CD8-positive, alpha-beta T cell (primary cell): ENCODE measurements at regions of chr9 and their contacts with region 1.

Region 1: DNA sequence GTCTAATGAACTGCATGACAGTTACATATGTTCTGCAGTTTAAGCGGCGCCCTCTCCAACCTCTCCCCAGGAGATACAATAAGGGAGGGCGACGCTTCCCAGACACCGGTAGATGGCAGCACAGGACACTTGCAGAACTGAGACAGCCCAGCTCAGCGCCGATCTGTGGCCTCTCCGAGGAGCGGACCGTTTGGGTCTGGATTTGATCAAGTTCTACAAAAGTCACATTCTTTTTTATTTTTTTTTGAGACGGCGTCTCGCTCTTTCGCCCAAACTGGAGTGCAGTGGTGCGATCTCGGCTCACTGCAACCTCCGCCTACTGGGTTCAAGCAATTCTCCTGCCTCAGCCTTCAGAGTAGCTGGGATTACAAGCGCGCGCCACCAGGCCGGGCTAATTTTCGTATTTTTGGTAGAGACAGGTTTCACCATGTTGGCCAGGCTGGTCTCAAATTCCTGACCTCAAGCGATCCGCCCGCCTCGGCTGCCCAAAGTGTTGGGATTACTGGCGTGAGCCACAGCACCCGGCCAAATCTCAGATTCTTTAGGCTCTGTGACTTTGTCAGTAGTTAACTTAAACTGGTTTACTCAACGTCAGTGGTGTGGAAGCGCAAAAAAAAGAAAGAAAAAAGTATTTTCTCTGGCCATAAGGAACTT is 1.4 kb upstream of the ATOSB start:
- DNase-seq: peak; percentile 78 to 96 (median 88)
- ATAC-seq: peak; percentile 65
- H3K4me3 ChIP-seq: peak overlapping the region; percentile 64 to 69
- H3K4me3 Mint-ChIP-seq: peak overlapping the region; percentile 94
- H3K27ac ChIP-seq: peak overlapping the region; percentile 64 to 91
- H3K27ac Mint-ChIP-seq: peak overlapping the region; percentile 94
- H3K4me1 ChIP-seq: peaks cover 34% of the 10 kb centered on the region
- H3K4me1 Mint-ChIP-seq: peaks cover 42% of the 10 kb centered on the region
- H3K27me3 ChIP-seq: peaks cover 0 to 2% of the 10 kb centered on the region in 2 experiments
- H3K27me3 Mint-ChIP-seq: peaks cover 2% of the 10 kb centered on the region
- CTCF ChIP-seq: peak; percentile 95

Region 2: DNA sequence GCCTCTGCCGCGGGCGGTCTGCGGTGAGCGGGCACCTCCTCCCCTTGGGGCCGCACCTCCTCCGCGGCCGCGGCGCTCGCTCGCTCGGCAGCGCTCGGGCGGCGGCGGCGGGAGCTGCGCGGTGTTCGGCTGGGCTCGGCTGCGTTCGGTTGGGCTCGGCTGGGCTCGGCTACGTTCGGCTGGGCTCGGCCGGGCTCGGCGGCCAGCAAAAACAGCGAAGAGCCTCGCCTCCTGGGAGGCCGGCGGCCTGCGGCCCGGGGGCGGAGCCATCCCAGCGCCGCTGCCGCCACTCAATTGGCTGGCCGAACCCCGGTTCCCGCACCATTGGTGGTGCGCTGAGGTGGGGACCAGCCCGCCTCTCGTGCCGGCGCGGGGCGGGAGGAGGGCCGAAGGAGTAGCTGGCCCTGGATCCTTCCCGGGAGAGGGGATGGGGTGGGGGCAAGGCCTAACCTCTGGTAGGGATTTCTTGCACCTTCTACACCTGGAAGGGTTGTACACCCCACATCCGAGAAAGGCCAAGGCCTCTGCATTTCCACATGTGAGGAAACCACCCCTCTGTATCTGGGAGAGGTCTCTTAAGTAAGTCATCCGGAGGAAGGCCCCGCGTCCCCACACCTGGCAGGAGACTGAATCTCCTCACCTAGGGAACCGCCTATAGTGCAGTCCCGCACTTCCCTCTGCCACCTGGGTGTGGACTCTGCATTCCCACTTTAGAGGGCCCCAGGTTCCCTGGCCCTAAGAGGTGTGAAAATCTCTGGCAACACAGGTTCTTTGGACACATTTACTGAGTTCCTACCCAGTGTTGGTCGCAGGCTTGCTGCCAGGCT is 593.8 kb before region 1 on chr9 and contains the start of gene ENHO:
- CTCF ChIA-PET with region 1: no interaction called
- POLR2A ChIA-PET with region 1: no interaction called
- intact Hi-C with region 1: loop called (anchors 2 to 10 kb)
- DNase-seq: peak; percentile 79 to 96 (median 87)
- ATAC-seq: peak; percentile 97
- H3K4me3 ChIP-seq: peak within 1 kb of the TSS; percentile 48 to 70
- H3K4me3 Mint-ChIP-seq: peak within 1 kb of the TSS; percentile 83
- H3K27ac ChIP-seq: peak within 1 kb of the TSS in 1 of 2 experiments; percentile 33
- H3K27ac Mint-ChIP-seq: no peak within 1 kb of the TSS
- H3K4me1 ChIP-seq: peaks cover 9% of the 10 kb centered on the region
- H3K4me1 Mint-ChIP-seq: peaks cover 4% of the 10 kb centered on the region
- H3K27me3 ChIP-seq: no peaks in the 10 kb centered on the region
- H3K27me3 Mint-ChIP-seq: peaks cover 2% of the 10 kb centered on the region
- CTCF ChIP-seq: no peak
- total RNA-seq, gene ENHO: not detected

Region 3: DNA sequence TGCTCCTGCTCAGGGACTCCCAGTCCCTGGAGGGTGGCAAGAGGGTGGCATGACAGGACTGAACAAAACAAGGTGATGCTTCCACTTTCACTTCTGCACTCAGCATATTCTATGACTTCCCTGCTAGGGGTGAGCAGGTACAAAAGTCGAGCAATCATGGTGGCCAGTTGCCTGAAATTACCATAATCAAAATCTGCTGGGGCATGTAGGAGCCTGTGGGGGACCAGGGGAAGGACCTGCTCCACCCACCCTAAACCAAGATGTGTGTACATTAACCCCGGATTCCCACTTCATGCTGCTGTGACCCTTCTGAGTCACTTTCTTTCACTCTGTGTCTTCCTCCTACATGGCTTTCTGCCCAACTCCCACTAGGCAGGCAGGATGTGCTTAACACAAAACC is 232.3 kb before region 1 on chr9:
- CTCF ChIA-PET with region 1: no interaction called
- POLR2A ChIA-PET with region 1: no interaction called
- intact Hi-C with region 1: no loop called
- DNase-seq: no peak
- ATAC-seq: no peak
- H3K4me3 ChIP-seq: no peak overlapping the region
- H3K4me3 Mint-ChIP-seq: no peak overlapping the region
- H3K27ac ChIP-seq: no peak overlapping the region
- H3K27ac Mint-ChIP-seq: no peak overlapping the region
- H3K4me1 ChIP-seq: no peaks in the 10 kb centered on the region
- H3K4me1 Mint-ChIP-seq: peaks cover 3% of the 10 kb centered on the region
- H3K27me3 ChIP-seq: no peaks in the 10 kb centered on the region
- H3K27me3 Mint-ChIP-seq: peaks cover 2% of the 10 kb centered on the region
- CTCF ChIP-seq: no peak

Region 4: DNA sequence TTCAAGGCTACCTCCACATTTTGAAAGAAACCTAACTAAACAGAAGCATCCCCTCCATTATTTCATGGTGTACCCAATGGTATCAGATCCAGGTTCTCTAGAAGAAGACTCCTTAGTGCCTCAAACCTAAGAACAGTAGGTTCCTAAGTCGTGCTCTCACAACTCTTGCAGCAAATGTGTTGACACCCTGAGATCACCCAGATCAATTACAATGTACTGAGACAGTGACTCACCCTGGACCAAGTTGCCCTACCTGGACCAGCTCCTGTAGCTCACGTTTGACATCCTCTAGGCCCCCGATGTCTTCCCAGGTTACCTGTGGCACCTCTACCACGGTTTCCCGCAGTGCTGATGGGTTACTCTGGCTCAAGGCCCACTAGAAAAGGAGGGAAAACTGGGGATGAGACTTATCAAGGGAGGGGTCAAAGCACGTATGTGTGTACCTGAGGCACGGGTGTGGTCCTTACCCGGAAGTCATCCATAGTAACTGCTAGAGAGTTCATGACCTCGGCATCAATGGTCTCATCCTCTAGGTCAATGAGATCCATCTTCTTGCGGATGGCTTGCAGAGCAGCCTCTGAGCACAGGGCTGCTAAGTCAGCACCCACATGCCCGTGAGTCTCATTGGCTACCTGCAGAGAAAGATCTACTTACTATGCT is 56.3 kb before region 1 on chr9:
- CTCF ChIA-PET with region 1: no interaction called
- POLR2A ChIA-PET with region 1: no interaction called
- intact Hi-C with region 1: no loop called
- DNase-seq: no peak
- ATAC-seq: no peak
- H3K4me3 ChIP-seq: no peak overlapping the region
- H3K4me3 Mint-ChIP-seq: no peak overlapping the region
- H3K27ac ChIP-seq: no peak overlapping the region
- H3K27ac Mint-ChIP-seq: no peak overlapping the region
- H3K4me1 ChIP-seq: no peaks in the 10 kb centered on the region
- H3K4me1 Mint-ChIP-seq: peaks cover 1% of the 10 kb centered on the region
- H3K27me3 ChIP-seq: no peaks in the 10 kb centered on the region
- H3K27me3 Mint-ChIP-seq: no peaks in the 10 kb centered on the region
- CTCF ChIP-seq: no peak

Region 5: DNA sequence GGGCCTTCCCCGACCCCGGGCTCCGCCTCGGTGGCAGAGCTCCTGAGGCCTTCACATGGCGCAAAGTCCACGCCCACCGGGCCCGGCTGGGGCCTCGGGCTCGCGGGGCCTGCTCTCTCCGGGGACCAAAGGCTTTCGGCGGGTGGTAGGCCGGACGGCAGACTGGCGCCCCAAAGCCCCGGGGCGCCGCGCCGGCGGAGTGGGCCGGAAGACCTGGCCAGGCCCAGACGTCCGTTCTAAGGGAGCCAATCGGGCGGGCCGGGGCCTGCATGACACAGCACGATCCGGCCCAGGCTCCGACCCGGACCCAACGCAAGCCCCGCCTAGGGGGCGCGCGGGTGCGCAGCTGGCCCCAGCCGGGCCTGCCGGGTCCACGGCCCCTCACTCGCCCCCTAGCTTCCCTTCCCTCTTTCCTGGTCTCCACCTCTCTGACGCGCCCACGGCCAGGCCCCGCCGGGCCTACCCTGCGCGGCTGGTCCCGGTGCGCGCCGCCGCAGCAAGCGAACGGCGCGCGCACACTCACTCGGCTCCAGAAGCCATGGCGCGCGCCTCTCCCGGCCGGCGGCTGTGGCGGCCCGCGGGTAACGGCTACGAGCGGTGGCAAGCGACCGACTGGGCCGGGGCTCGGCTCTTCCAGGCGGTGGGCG is 45.1 kb before region 1 on chr9:
- CTCF ChIA-PET with region 1: interaction called, 3 read pairs
- POLR2A ChIA-PET with region 1: interaction called, 16 read pairs
- intact Hi-C with region 1: loop called (anchors 1 kb)
- DNase-seq: peak; percentile 40 to 87 (median 73)
- ATAC-seq: peak; percentile 49
- H3K4me3 ChIP-seq: peak overlapping the region; percentile 82 to 93
- H3K4me3 Mint-ChIP-seq: peak overlapping the region; percentile 93
- H3K27ac ChIP-seq: peak overlapping the region; percentile 91 to 94
- H3K27ac Mint-ChIP-seq: peak overlapping the region; percentile 97
- H3K4me1 ChIP-seq: peaks cover 49% of the 10 kb centered on the region
- H3K4me1 Mint-ChIP-seq: peaks cover 49% of the 10 kb centered on the region
- H3K27me3 ChIP-seq: no peaks in the 10 kb centered on the region
- H3K27me3 Mint-ChIP-seq: no peaks in the 10 kb centered on the region
- CTCF ChIP-seq: peak; percentile 43

Region 6: GRCh38 chr9:35161713-35162604 is 44.9 kb after region 1 on chr9 and contains the start of gene UNC13B:
- CTCF ChIA-PET with region 1: interaction called, 5 read pairs
- POLR2A ChIA-PET with region 1: interaction called, 4 read pairs
- intact Hi-C with region 1: loop called (anchors 1 kb)
- DNase-seq: peak; percentile 21 to 84 (median 70)
- ATAC-seq: peak; percentile 92
- H3K4me3 ChIP-seq: peak within 1 kb of the TSS; percentile 85 to 89
- H3K4me3 Mint-ChIP-seq: peak within 1 kb of the TSS; percentile 92
- H3K27ac ChIP-seq: peak within 1 kb of the TSS in 1 of 2 experiments; percentile 1
- H3K27ac Mint-ChIP-seq: peak within 1 kb of the TSS; percentile 19
- H3K4me1 ChIP-seq: peaks cover 8% of the 10 kb centered on the region
- H3K4me1 Mint-ChIP-seq: peaks cover 20% of the 10 kb centered on the region
- H3K27me3 ChIP-seq: no peaks in the 10 kb centered on the region
- H3K27me3 Mint-ChIP-seq: peaks cover 7% of the 10 kb centered on the region
- CTCF ChIP-seq: no peak
- total RNA-seq, gene UNC13B: 0.14 to 0.76 TPM

Region 7: DNA sequence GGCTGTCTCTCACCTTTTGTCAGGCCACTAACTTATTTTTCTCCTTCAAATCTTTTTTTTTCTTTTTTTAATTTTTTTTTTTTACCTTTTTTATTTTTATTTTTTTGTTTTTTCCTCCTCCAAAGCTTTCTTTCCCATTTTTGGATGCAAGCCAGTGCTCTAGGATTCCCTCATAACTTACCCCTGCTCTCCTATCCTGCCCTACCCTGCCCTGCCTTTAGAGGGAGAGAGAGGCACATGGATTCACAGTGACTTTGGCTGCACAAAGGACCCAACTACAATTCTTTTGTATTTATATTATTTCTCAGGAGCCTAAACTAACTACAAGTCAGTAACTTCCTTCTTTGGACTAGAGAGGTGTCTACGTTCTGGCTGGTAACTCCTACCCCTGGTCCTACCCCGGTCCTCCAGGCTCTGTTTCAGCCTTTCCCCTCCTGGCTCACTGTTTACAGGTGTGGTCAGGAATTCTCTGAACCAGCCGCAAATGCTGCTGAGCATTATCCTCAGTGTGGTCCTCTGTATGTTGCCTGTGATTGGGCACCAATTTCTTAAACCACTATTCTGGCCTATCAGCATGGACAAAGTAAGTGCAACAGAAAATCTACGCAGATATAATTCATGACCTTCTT is 364.4 kb after region 1 on chr9:
- CTCF ChIA-PET with region 1: interaction called, 9 read pairs
- POLR2A ChIA-PET with region 1: no interaction called
- intact Hi-C with region 1: loop called (anchors 1 kb)
- DNase-seq: peak in 2 of 9 experiments; percentile 13 to 26
- ATAC-seq: peak; percentile 40
- H3K4me3 ChIP-seq: no peak overlapping the region
- H3K4me3 Mint-ChIP-seq: no peak overlapping the region
- H3K27ac ChIP-seq: no peak overlapping the region
- H3K27ac Mint-ChIP-seq: no peak overlapping the region
- H3K4me1 ChIP-seq: no peaks in the 10 kb centered on the region
- H3K4me1 Mint-ChIP-seq: no peaks in the 10 kb centered on the region
- H3K27me3 ChIP-seq: peaks cover 2 to 6% of the 10 kb centered on the region in 2 experiments
- H3K27me3 Mint-ChIP-seq: peaks cover 5% of the 10 kb centered on the region
- CTCF ChIP-seq: peak; percentile 22

Region 8: GRCh38 chr9:35657546-35658136 is 540.6 kb after region 1 on chr9 and contains the start of gene RMRP:
- CTCF ChIA-PET with region 1: no interaction called
- POLR2A ChIA-PET with region 1: no interaction called
- intact Hi-C with region 1: loop called in 1 of 2 experiments (anchors 2 kb)
- DNase-seq: peak; percentile 58 to 98 (median 83)
- ATAC-seq: peak; percentile 72
- H3K4me3 ChIP-seq: peak within 1 kb of the TSS; percentile 91 to 94
- H3K4me3 Mint-ChIP-seq: peak within 1 kb of the TSS; percentile 93
- H3K27ac ChIP-seq: peak within 1 kb of the TSS; percentile 99 to 100
- H3K27ac Mint-ChIP-seq: peak within 1 kb of the TSS; percentile 98
- H3K4me1 ChIP-seq: peaks cover 45% of the 10 kb centered on the region
- H3K4me1 Mint-ChIP-seq: peaks cover 69% of the 10 kb centered on the region
- H3K27me3 ChIP-seq: peaks cover 0 to 3% of the 10 kb centered on the region in 2 experiments
- H3K27me3 Mint-ChIP-seq: peaks cover 2% of the 10 kb centered on the region
- CTCF ChIP-seq: no peak
- total RNA-seq, gene RMRP: 22,073 to 26,359 TPM

Region 9: DNA sequence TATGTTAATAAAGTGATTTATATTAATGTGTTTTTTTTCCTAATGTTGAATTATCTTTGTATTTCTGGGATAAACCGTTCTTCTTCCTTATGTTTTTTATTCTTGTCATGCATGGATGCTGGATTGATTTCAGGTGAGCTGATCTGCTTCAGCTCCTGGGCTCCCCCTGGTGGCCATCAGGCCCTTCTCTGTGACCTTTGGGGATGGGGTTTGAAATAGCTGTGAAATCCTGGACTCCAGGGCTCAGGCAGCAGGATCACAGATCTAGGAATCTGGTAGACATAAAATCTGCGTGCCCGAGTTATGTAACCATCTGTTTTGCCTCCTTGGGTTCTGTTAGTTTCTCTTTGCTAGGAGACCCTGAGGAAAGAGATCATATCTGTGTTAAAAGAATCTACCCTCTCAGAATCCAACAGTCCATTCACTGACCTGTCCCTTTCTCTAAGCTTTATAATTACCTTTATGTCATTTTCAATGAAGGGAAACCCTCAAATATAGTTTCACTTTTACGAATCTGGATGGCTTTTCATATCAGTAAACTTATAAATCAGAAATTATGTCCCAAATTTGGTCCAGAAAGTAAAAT is 765.3 kb after region 1 on chr9:
- CTCF ChIA-PET with region 1: no interaction called
- POLR2A ChIA-PET with region 1: no interaction called
- intact Hi-C with region 1: loop called (anchors 5 kb)
- DNase-seq: peak; percentile 49 to 88 (median 80)
- ATAC-seq: peak; percentile 88
- H3K4me3 ChIP-seq: no peak overlapping the region
- H3K4me3 Mint-ChIP-seq: no peak overlapping the region
- H3K27ac ChIP-seq: no peak overlapping the region
- H3K27ac Mint-ChIP-seq: no peak overlapping the region
- H3K4me1 ChIP-seq: no peaks in the 10 kb centered on the region
- H3K4me1 Mint-ChIP-seq: no peaks in the 10 kb centered on the region
- H3K27me3 ChIP-seq: no peaks in the 10 kb centered on the region
- H3K27me3 Mint-ChIP-seq: peaks cover 4% of the 10 kb centered on the region
- CTCF ChIP-seq: peak; percentile 96